IMR-90 (cell line): ENCODE measurements at regions of chr17 and their contacts with region 1.

Region 1: GRCh38 chr17:65556014-65556909 is 5.2 kb downstream of the AXIN2 start:
- DNase-seq: peak; percentile 50
- ATAC-seq: no peak
- H3K4me3 ChIP-seq: no peak overlapping the region
- H3K27ac ChIP-seq: no peak overlapping the region
- H3K4me1 ChIP-seq: peaks cover 17% of the 10 kb centered on the region
- H3K27me3 ChIP-seq: peaks cover 15% of the 10 kb centered on the region
- CTCF ChIP-seq: peak; percentile 62
- POLR2A ChIP-seq: no peak
- RAD21 ChIP-seq: peak; percentile 60

Region 2: GRCh38 chr17:65278050-65278819 is 278.0 kb before region 1 on chr17:
- CTCF ChIA-PET with region 1: no interaction called
- POLR2A ChIA-PET with region 1: no interaction called
- dilution Hi-C with region 1: no loop called
- in situ Hi-C with region 1: no loop called
- intact Hi-C with region 1: loop called (anchors 5 kb)
- DNase-seq: peak; percentile 62
- ATAC-seq: peak; percentile 97
- H3K4me3 ChIP-seq: no peak overlapping the region
- H3K27ac ChIP-seq: no peak overlapping the region
- H3K4me1 ChIP-seq: peaks cover 3% of the 10 kb centered on the region; the same call in 1 of the 2 replicates
- H3K27me3 ChIP-seq: peaks cover 4% of the 10 kb centered on the region
- CTCF ChIP-seq: peak; percentile 72
- POLR2A ChIP-seq: no peak
- RAD21 ChIP-seq: peak; percentile 84

Region 3: DNA sequence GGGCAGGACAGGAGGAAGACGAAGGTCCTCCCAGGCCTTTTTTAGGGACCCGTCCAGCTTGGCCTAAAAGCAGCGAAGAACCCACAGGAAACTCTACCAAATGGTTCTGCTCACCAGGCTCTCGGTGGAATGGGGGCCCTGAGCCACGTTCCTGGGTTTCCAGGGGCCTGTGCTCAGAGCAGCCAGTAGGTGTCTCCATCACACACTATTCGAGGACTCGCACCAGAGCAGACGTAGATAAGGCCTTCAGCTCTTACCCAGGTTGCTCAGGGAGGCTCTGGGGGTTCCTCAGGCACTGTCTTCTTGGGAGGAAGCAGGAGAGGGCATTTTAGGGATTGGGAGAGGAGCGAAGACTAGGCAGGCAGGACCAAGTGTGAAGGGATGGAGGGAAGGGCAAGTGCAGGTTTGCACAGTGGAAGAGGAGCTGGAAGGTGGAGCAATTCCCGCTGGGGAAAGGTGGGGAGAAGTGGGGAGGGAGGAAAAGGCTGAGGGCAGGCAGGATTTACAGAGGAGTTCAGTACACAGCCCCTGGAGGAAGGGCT is 262.0 kb before region 1 on chr17:
- CTCF ChIA-PET with region 1: interaction called, 9 read pairs
- POLR2A ChIA-PET with region 1: no interaction called
- dilution Hi-C with region 1: no loop called
- in situ Hi-C with region 1: loop called (anchors 5 kb)
- intact Hi-C with region 1: loop called (anchors 1 kb)
- DNase-seq: peak; percentile 71
- ATAC-seq: peak; percentile 99
- H3K4me3 ChIP-seq: no peak overlapping the region
- H3K27ac ChIP-seq: no peak overlapping the region
- H3K4me1 ChIP-seq: no peaks in the 10 kb centered on the region
- H3K27me3 ChIP-seq: no peaks in the 10 kb centered on the region; the same call in none of the 2 replicates
- CTCF ChIP-seq: peak; percentile 83
- POLR2A ChIP-seq: no peak
- RAD21 ChIP-seq: peak; percentile 85

Region 4: GRCh38 chr17:65455972-65456343 is 100.3 kb before region 1 on chr17:
- CTCF ChIA-PET with region 1: no interaction called
- POLR2A ChIA-PET with region 1: no interaction called
- dilution Hi-C with region 1: no loop called
- in situ Hi-C with region 1: no loop called
- intact Hi-C with region 1: loop called (anchors 2 kb)
- DNase-seq: peak; percentile 1
- ATAC-seq: peak; percentile 70
- H3K4me3 ChIP-seq: no peak overlapping the region
- H3K27ac ChIP-seq: no peak overlapping the region
- H3K4me1 ChIP-seq: no peaks in the 10 kb centered on the region
- H3K27me3 ChIP-seq: peaks cover 15% of the 10 kb centered on the region
- CTCF ChIP-seq: peak; percentile 44
- POLR2A ChIP-seq: no peak
- RAD21 ChIP-seq: peak; percentile 44

Region 5: DNA sequence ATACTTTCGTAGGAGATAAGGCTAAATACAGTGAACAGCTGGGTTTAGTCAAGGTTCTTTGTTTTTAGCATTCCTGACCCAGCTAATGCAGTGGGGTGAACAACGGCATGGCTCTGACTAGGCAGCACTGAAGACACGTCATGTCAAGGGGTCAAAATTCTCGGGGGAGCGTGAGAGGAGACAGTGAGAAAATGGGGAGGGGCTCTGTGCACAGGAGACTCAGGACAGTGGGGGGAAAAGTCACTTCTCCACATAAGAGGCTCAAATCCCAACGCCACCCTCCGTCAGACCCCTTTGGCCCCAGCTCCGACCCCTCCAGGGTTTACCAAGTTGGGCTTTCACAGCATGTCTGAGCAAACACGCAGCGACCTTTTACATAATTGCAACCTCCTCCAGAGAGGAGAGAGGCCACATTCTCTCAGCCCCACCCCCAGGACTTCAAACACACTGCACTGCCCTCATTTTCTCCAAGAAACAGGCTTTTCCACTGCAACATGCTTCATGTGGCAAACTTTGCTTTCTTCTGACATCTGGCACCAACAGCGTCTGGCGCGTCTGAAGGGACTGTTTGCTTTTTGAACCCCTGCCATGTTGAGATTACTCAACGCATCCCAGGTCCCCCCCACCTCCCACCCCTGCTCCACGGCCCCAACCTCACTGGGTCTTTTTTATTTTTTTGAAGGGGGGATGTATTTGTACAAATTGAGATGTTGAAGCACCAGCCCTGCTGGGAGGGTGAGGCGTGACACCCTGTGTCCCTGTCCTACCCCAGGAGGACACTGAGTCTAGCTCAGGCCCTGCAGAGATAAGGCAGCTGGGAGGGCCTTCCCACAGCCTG is 24.8 kb before region 1 on chr17:
- CTCF ChIA-PET with region 1: no interaction called
- POLR2A ChIA-PET with region 1: no interaction called
- dilution Hi-C with region 1: no loop called
- in situ Hi-C with region 1: no loop called
- intact Hi-C with region 1: loop called (anchors 1 kb)
- DNase-seq: peak; percentile 88
- ATAC-seq: peak; percentile 93
- H3K4me3 ChIP-seq: no peak overlapping the region
- H3K27ac ChIP-seq: peak overlapping the region; percentile 63; the same call in 1 of the 2 replicates
- H3K4me1 ChIP-seq: peaks cover 26% of the 10 kb centered on the region
- H3K27me3 ChIP-seq: no peaks in the 10 kb centered on the region
- CTCF ChIP-seq: 0 out of 2 replicates have a peak, but pooled peaks have one; percentile 16
- POLR2A ChIP-seq: no peak
- RAD21 ChIP-seq: no peak

Region 6: GRCh38 chr17:65588176-65588808 is 32.0 kb after region 1 on chr17:
- CTCF ChIA-PET with region 1: no interaction called
- POLR2A ChIA-PET with region 1: no interaction called
- dilution Hi-C with region 1: no loop called
- in situ Hi-C with region 1: no loop called
- intact Hi-C with region 1: no loop called
- DNase-seq: no peak
- ATAC-seq: no peak
- H3K4me3 ChIP-seq: no peak overlapping the region
- H3K27ac ChIP-seq: no peak overlapping the region
- H3K4me1 ChIP-seq: no peaks in the 10 kb centered on the region
- H3K27me3 ChIP-seq: no peaks in the 10 kb centered on the region; the same call in 1 of the 2 replicates
- CTCF ChIP-seq: no peak
- POLR2A ChIP-seq: no peak
- RAD21 ChIP-seq: no peak

Region 7: GRCh38 chr17:65604070-65604469 is 47.8 kb after region 1 on chr17:
- CTCF ChIA-PET with region 1: no interaction called
- POLR2A ChIA-PET with region 1: no interaction called
- dilution Hi-C with region 1: no loop called
- in situ Hi-C with region 1: no loop called
- intact Hi-C with region 1: no loop called
- DNase-seq: peak; percentile 9
- ATAC-seq: no peak
- H3K4me3 ChIP-seq: no peak overlapping the region
- H3K27ac ChIP-seq: no peak overlapping the region
- H3K4me1 ChIP-seq: no peaks in the 10 kb centered on the region
- H3K27me3 ChIP-seq: peaks cover 15% of the 10 kb centered on the region
- CTCF ChIP-seq: no peak
- POLR2A ChIP-seq: no peak
- RAD21 ChIP-seq: no peak